Thyroid gland (tissue), 4 donors: ENCODE measurements at regions of chr11 and their contacts with region 1.

Region 1: GRCh38 chr11:111977146-111978027 is 40.2 kb downstream of the DIXDC1 start:
- DNase-seq: peak; percentile 83 to 88
- H3K4me3 ChIP-seq: peak overlapping the region; percentile 7 to 74 (median 8)
- H3K27ac ChIP-seq: peak overlapping the region; percentile 93 to 97 (median 97)
- H3K4me1 ChIP-seq: peaks cover 17 to 50% of the 10 kb centered on the region in 2 donors
- H3K27me3 ChIP-seq: no peaks in the 10 kb centered on the region
- CTCF ChIP-seq: no peak
- POLR2A ChIP-seq: peak in 1 of 2 donors; percentile 45

Region 2: DNA sequence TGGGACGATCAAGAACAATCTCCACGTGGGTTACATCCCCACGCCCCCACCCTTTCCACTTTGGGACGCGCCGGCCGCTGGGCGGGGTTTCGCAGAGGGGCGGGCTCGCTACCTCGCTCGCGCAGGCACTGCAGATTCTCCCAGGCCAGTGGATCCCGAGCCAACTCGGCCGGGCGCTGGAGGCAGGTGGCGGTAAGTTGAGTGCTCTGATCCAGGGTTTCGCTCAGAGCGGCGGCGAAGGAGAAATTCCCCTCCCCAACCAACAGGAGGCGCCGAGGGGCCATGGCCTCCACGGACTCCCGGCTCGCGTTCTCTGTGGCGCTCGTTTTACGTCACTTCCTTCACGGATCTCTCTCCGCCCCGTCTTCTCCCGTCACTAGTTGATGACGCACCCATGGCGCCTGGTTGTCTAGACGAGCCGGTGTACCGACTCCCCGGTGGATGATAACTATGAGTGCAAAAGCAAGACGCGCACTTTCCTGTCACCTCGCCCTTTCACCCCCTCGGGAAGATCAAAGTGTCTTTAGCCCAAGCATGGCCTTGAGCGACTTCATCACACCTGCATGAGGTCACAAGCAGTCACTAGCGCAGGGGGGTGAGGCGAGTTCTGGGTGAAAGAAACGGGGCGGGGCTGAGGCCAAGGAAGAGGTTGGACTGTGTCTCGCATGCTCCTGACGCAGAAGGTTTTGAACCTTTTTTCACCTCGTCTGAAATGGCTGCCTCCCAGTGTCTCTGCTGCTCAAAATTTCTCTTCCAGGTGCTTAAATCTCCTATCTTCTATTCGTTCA is 98.3 kb before region 1 on chr11 and contains the starts of genes CFAP68 and FDXACB1:
- intact Hi-C with region 1: loop called (anchors 5 kb)
- DNase-seq: peak; percentile 96 to 97
- H3K4me3 ChIP-seq: peak within 1 kb of the TSS; percentile 34 to 48 (median 41)
- H3K27ac ChIP-seq: peak within 1 kb of the TSS; percentile 94 to 99 (median 96)
- H3K4me1 ChIP-seq: peaks cover 3 to 18% of the 10 kb centered on the region in 2 donors
- H3K27me3 ChIP-seq: no peaks in the 10 kb centered on the region
- CTCF ChIP-seq: peak; percentile 92 to 100 (median 98)
- POLR2A ChIP-seq: peak in 1 of 2 donors; percentile 87
- total RNA-seq, gene CFAP68: 24.7 to 47.1 (median 38.0) TPM
- total RNA-seq, gene FDXACB1: 1.8 to 3.0 (median 2.8) TPM

Region 3: DNA sequence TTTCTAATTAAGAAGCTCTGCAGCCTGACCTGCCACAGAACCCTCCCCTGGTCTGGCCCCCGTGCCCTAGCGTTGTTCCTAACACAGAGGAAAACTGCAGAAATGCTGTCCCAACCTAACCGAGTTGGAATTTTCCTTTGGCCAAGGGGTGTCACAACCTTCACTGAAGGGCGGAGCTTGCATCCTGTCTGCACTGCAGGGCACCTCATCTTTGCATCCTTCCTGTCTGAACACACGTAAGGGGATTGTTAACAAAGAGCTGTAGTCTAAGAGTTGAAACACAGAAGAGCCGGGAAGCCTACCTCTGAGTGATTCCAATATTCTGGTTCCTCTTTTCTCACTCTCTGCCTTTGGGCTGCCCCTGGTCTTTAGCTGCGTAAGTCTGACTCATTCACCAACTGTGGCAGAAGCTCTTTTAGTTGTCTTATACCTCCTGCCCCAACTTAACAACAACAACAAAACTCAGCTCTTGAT is 38.7 kb before region 1 on chr11:
- intact Hi-C with region 1: loop called (anchors 5 kb)
- DNase-seq: no peak
- H3K4me3 ChIP-seq: no peak overlapping the region
- H3K27ac ChIP-seq: peak overlapping the region; percentile 40 to 91 (median 86)
- H3K4me1 ChIP-seq: peaks cover 25 to 44% of the 10 kb centered on the region in 2 donors
- H3K27me3 ChIP-seq: no peaks in the 10 kb centered on the region
- CTCF ChIP-seq: no peak
- POLR2A ChIP-seq: no peak

Region 4: GRCh38 chr11:112042161-112042960 is 65.0 kb after region 1 on chr11:
- intact Hi-C with region 1: no loop called
- DNase-seq: no peak
- H3K4me3 ChIP-seq: no peak overlapping the region
- H3K27ac ChIP-seq: no peak overlapping the region
- H3K4me1 ChIP-seq: no peaks in the 10 kb centered on the region
- H3K27me3 ChIP-seq: no peaks in the 10 kb centered on the region
- CTCF ChIP-seq: no peak
- POLR2A ChIP-seq: no peak

Region 5: GRCh38 chr11:112588252-112588694 is 610.9 kb after region 1 on chr11:
- intact Hi-C with region 1: no loop called
- DNase-seq: peak; percentile 59 to 64
- H3K4me3 ChIP-seq: no peak overlapping the region
- H3K27ac ChIP-seq: no peak overlapping the region
- H3K4me1 ChIP-seq: no peaks in the 10 kb centered on the region
- H3K27me3 ChIP-seq: no peaks in the 10 kb centered on the region
- CTCF ChIP-seq: peak; percentile 41 to 75 (median 68)
- POLR2A ChIP-seq: no peak